ENCODE measurements at regions of chr2 and their contacts with region 1.

Region 1: GRCh38 chr2:112584134-112584890 is at the start of gene CHCHD5:
- DNase-seq: peak; percentile 87
- H3K4me3 ChIP-seq: peak within 1 kb of the TSS; percentile 78 to 83
- H3K27ac ChIP-seq: peak within 1 kb of the TSS; percentile 97 to 98
- H3K4me1 ChIP-seq: peaks cover 12 to 31% of the 10 kb centered on the region in 2 experiments; a peak in 3 of 4 replicates
- H3K27me3 ChIP-seq: no peaks in the 10 kb centered on the region
- CTCF ChIP-seq: 0 out of 2 replicates have a peak, but pooled peaks have one; percentile 6
- EP300 ChIP-seq: no peak; a peak in 1 of 4 replicates
- RAD21 ChIP-seq: no peak
- polyA plus RNA-seq, gene CHCHD5: 29.9 and 55.9 TPM in 2 replicates

Region 2: GRCh38 chr2:112075490-112076260 is 508.6 kb before region 1 on chr2:
- CTCF ChIA-PET with region 1: no interaction called
- POLR2A ChIA-PET with region 1: no interaction called
- DNase-seq: no peak
- H3K4me3 ChIP-seq: no peak overlapping the region
- H3K27ac ChIP-seq: peak overlapping the region in 1 of 2 experiments; percentile 48; a peak in 2 of 4 replicates
- H3K4me1 ChIP-seq: peaks cover 0 to 16% of the 10 kb centered on the region in 2 experiments; a peak in 1 of 4 replicates
- H3K27me3 ChIP-seq: no peaks in the 10 kb centered on the region
- CTCF ChIP-seq: no peak
- EP300 ChIP-seq: 0 out of 4 replicates have a peak, but pooled peaks of 1 of the 2 experiments have one; percentile 11
- RAD21 ChIP-seq: no peak

Region 3: DNA sequence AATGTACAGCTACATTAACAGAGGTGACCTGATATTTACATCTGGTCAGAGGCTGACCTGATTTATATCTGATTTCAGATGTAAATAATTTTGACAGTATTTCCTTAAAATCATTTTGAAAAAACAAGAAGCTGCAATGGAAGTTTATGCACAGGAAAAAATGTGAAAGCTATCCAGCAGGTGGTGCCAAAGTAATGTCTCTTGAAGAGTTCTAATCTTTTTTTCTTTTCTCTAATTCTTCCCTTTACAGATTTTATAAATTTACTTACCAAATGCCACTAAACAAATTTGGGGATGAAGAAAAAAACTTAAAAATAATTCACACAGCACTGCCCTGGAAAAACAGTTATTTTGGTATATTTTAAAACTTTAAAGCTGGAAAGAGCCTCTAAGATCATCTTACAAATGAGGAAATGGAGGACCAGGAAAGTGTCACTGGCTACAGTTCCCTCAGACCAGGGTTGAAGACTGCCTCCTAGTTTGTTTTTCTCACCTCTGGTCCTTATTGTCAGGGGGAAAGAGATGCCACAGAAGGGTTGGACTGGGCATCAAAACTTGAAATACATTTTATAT is 462.5 kb before region 1 on chr2:
- CTCF ChIA-PET with region 1: interaction called, 12 read pairs
- POLR2A ChIA-PET with region 1: no interaction called
- DNase-seq: peak; percentile 29
- H3K4me3 ChIP-seq: no peak overlapping the region; a peak in 1 of 4 replicates
- H3K27ac ChIP-seq: no peak overlapping the region
- H3K4me1 ChIP-seq: no peaks in the 10 kb centered on the region
- H3K27me3 ChIP-seq: no peaks in the 10 kb centered on the region
- CTCF ChIP-seq: peak; percentile 68
- EP300 ChIP-seq: no peak
- RAD21 ChIP-seq: peak; percentile 70

Region 4: DNA sequence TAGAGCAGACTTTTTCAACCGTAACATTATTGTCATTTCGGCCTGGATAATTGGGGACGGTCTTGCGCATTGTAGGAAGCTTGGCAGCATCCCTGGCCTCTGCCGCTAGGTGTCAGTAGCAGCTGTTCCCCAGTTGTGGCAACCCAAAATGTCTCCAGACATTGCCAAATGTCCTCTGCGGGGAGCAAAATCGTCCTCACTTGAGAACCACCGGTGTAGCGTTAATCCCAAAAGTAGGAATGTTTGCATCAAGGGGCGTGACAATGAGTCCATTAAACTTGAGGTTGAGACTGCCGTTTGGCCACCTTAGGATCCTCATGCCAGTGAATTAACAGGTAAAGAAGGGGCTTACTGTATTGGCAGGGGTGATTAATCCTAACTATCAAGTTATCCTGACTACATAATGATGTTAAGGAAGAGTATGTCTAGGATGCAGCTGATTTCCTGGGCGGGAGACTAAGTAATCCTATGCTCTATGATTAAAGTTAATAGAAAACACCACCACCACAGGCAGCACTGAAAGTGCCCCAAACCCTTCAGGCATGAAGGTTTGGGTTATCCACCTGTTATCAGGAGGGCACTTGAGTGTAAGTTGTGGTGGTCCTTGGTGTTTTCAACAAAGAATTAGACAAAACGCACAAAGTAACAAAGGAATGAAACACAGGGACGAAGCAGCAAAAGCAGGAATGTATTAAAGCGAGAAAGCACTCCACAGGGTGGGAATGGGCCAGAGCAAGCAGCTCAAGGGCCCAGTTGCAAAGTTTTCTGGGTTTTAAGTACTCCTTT is 324.6 kb before region 1 on chr2:
- CTCF ChIA-PET with region 1: interaction called, 21 read pairs
- POLR2A ChIA-PET with region 1: interaction called, 5 read pairs
- DNase-seq: peak; percentile 70
- H3K4me3 ChIP-seq: peak overlapping the region; percentile 21 to 42; a peak in 2 of 4 replicates
- H3K27ac ChIP-seq: no peak overlapping the region
- H3K4me1 ChIP-seq: peaks cover 3 to 4% of the 10 kb centered on the region in 2 experiments; a peak in 2 of 4 replicates
- H3K27me3 ChIP-seq: no peaks in the 10 kb centered on the region
- CTCF ChIP-seq: peak; percentile 97
- EP300 ChIP-seq: no peak
- RAD21 ChIP-seq: peak; percentile 90

Region 5: GRCh38 chr2:112465382-112465781 is 118.9 kb before region 1 on chr2:
- CTCF ChIA-PET with region 1: no interaction called
- POLR2A ChIA-PET with region 1: no interaction called
- DNase-seq: peak; percentile 20
- H3K4me3 ChIP-seq: no peak overlapping the region
- H3K27ac ChIP-seq: no peak overlapping the region
- H3K4me1 ChIP-seq: no peaks in the 10 kb centered on the region
- H3K27me3 ChIP-seq: no peaks in the 10 kb centered on the region
- CTCF ChIP-seq: peak; percentile 34
- EP300 ChIP-seq: no peak
- RAD21 ChIP-seq: no peak

Region 6: DNA sequence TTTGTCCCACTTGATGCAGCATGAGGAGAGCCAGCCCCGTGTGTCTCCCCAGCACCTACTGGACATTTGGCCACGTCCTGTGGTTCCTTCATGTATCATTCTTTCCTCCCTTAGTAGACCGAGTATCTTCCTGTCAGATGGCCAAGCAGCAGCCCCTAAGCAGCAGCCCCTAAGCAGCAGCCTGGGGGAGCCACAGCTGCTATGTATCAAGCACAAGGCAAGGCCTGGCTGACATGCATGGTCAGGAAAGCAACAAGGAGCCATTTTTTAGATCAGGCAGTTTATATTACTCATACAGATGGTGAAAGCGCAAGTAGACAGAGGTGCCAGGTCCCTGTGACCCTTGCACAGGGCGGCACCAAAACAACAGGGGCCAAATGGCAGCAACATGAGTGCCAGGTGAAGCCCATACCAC is 22.2 kb after region 1 on chr2:
- CTCF ChIA-PET with region 1: interaction called, 28 read pairs
- POLR2A ChIA-PET with region 1: no interaction called
- DNase-seq: no peak
- H3K4me3 ChIP-seq: no peak overlapping the region
- H3K27ac ChIP-seq: no peak overlapping the region
- H3K4me1 ChIP-seq: no peaks in the 10 kb centered on the region
- H3K27me3 ChIP-seq: no peaks in the 10 kb centered on the region
- CTCF ChIP-seq: no peak
- EP300 ChIP-seq: no peak
- RAD21 ChIP-seq: no peak

Region 7: GRCh38 chr2:112784199-112785189 is 200.2 kb after region 1 on chr2 and contains the start of gene IL1A:
- CTCF ChIA-PET with region 1: no interaction called
- POLR2A ChIA-PET with region 1: no interaction called
- DNase-seq: no peak
- H3K4me3 ChIP-seq: peak within 1 kb of the TSS in 1 of 2 experiments; percentile 9; a peak in 1 of 4 replicates
- H3K27ac ChIP-seq: no peak within 1 kb of the TSS
- H3K4me1 ChIP-seq: no peaks in the 10 kb centered on the region
- H3K27me3 ChIP-seq: no peaks in the 10 kb centered on the region
- CTCF ChIP-seq: no peak
- EP300 ChIP-seq: no peak
- RAD21 ChIP-seq: no peak
- polyA plus RNA-seq, gene IL1A: not detected in 2 replicates